ENCODE measurements at regions of chr7 and their contacts with region 1.

Region 1: DNA sequence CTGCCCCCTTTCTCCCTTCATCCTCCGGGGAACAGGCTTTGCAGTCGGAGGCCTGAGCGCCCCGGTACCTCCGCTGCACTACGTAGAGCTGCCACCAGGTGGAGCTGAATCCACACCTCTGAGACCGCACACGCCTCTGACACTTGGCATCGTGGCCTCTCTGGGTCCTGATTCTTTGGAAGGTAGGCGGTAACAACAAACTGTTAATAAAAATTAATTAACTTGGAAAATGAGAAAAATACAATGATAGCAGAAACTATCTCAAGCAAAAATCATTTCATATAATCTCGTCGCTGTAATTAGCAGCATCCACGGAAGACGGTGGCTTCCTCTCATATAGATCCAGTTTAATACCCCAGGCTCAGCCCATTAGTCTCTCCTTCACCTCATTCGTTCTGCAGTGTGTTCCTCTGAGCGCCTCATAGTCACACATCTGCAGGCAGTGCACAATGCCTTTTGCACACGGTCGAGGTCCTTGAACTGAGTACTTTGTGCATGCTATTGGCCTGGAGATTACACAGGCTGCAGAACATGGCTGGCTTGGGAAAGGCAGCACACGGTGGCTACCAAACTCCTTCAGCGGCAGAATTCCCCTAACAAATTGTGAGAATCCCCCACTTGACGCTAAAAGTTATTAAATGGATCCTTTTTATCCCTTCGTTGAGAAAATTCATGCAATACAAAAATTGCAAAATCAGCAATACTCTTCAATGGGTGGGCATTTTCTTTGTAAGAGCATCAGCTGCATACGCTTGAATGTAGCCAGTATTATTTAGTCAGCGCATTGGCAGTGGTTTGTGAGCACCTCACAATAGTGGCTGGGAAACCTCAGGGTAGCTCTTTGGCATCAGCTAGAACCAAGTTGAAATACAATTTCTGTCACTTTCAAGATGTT is 18.7 kb downstream of the OR9A2 start:
- DNase-seq: peak; percentile 61 to 96
- H3K4me3 ChIP-seq: no peak overlapping the region
- H3K27ac ChIP-seq: no peak overlapping the region
- H3K4me1 ChIP-seq: no peaks in the 10 kb centered on the region
- H3K27me3 ChIP-seq: no peaks in the 10 kb centered on the region
- CTCF ChIP-seq: peak; percentile 89 to 98 (median 95)
- EP300 ChIP-seq: no peak
- POLR2A ChIP-seq: no peak
- RAD21 ChIP-seq: peak; percentile 98 to 99

Region 2: DNA sequence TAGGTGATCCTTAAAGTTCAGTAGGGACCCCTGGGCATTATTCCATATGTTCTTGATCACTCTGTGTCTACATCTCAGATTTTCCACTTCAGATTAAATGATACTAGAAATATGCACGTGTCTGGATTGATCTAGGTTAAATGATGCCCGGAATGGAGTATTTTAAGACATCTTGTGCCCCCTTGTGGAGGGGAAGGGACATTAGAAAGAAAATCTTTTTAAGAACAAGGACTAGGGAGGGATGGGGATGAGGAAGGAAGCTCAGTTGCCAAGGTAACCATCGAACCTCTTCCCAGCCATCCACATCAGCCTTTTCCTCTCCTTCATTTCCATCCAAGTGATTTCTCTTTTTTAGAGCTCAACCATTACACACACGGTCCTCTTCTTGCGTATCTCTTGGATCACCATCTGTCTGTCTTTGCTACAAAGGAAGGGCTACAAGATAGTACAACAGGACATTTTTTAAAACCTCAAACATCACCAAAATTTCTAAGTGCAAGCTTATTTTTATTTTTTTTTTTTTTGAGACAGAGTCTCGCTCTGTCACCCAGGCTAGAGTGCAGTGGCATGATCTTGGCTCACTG is 197.0 kb before region 1 on chr7:
- CTCF ChIA-PET with region 1: interaction called, 17 read pairs
- POLR2A ChIA-PET with region 1: no interaction called
- DNase-seq: no peak
- H3K4me3 ChIP-seq: no peak overlapping the region
- H3K27ac ChIP-seq: no peak overlapping the region
- H3K4me1 ChIP-seq: peaks cover 10 to 23% (median 17%) of the 10 kb centered on the region in 4 experiments
- H3K27me3 ChIP-seq: no peaks in the 10 kb centered on the region
- CTCF ChIP-seq: peak in 2 of 3 experiments; percentile 60 to 68; a peak in 3 of 4 replicates
- EP300 ChIP-seq: no peak
- POLR2A ChIP-seq: no peak
- RAD21 ChIP-seq: peak; percentile 65 to 78

Region 3: GRCh38 chr7:142880876-142881505 is 127.3 kb before region 1 on chr7:
- CTCF ChIA-PET with region 1: interaction called, 332 read pairs
- POLR2A ChIA-PET with region 1: no interaction called
- DNase-seq: peak; percentile 23 to 78
- H3K4me3 ChIP-seq: no peak overlapping the region
- H3K27ac ChIP-seq: no peak overlapping the region
- H3K4me1 ChIP-seq: peaks cover 0 to 8% (median 2%) of the 10 kb centered on the region in 4 experiments; a peak in 2 of 7 replicates
- H3K27me3 ChIP-seq: 0 out of 7 replicates have a peak, but pooled peaks cover 0 to 2% (median 0%) of the 10 kb centered on the region in 4 experiments
- CTCF ChIP-seq: peak; percentile 83 to 96 (median 95)
- EP300 ChIP-seq: no peak
- POLR2A ChIP-seq: no peak
- RAD21 ChIP-seq: peak; percentile 77 to 84

Region 4: GRCh38 chr7:142908921-142909890 is 99.0 kb before region 1 on chr7:
- CTCF ChIA-PET with region 1: interaction called, 14 read pairs
- POLR2A ChIA-PET with region 1: no interaction called
- DNase-seq: no peak
- H3K4me3 ChIP-seq: no peak overlapping the region
- H3K27ac ChIP-seq: no peak overlapping the region
- H3K4me1 ChIP-seq: no peaks in the 10 kb centered on the region
- H3K27me3 ChIP-seq: no peaks in the 10 kb centered on the region
- CTCF ChIP-seq: peak; percentile 41 to 72 (median 53)
- EP300 ChIP-seq: no peak
- POLR2A ChIP-seq: no peak
- RAD21 ChIP-seq: peak; percentile 43 to 55

Region 5: GRCh38 chr7:142951276-142951675 is 57.0 kb before region 1 on chr7:
- CTCF ChIA-PET with region 1: interaction called, 10 read pairs
- POLR2A ChIA-PET with region 1: no interaction called
- DNase-seq: no peak
- H3K4me3 ChIP-seq: no peak overlapping the region
- H3K27ac ChIP-seq: no peak overlapping the region
- H3K4me1 ChIP-seq: no peaks in the 10 kb centered on the region
- H3K27me3 ChIP-seq: no peaks in the 10 kb centered on the region
- CTCF ChIP-seq: no peak
- EP300 ChIP-seq: no peak
- POLR2A ChIP-seq: no peak
- RAD21 ChIP-seq: no peak

Region 6: GRCh38 chr7:143055754-143056153 is 47.5 kb after region 1 on chr7:
- CTCF ChIA-PET with region 1: no interaction called
- POLR2A ChIA-PET with region 1: no interaction called
- DNase-seq: no peak
- H3K4me3 ChIP-seq: no peak overlapping the region
- H3K27ac ChIP-seq: no peak overlapping the region
- H3K4me1 ChIP-seq: no peaks in the 10 kb centered on the region
- H3K27me3 ChIP-seq: no peaks in the 10 kb centered on the region
- CTCF ChIP-seq: no peak
- EP300 ChIP-seq: no peak
- POLR2A ChIP-seq: no peak
- RAD21 ChIP-seq: no peak

Region 7: GRCh38 chr7:143172354-143172753 is 164.1 kb after region 1 on chr7:
- CTCF ChIA-PET with region 1: interaction called, 11 read pairs
- POLR2A ChIA-PET with region 1: no interaction called
- DNase-seq: no peak
- H3K4me3 ChIP-seq: no peak overlapping the region
- H3K27ac ChIP-seq: no peak overlapping the region
- H3K4me1 ChIP-seq: no peaks in the 10 kb centered on the region
- H3K27me3 ChIP-seq: no peaks in the 10 kb centered on the region
- CTCF ChIP-seq: no peak
- EP300 ChIP-seq: no peak
- POLR2A ChIP-seq: no peak
- RAD21 ChIP-seq: no peak